K562 (cell line): ENCODE measurements at regions of chr2 and their contacts with region 1.

Region 1: DNA sequence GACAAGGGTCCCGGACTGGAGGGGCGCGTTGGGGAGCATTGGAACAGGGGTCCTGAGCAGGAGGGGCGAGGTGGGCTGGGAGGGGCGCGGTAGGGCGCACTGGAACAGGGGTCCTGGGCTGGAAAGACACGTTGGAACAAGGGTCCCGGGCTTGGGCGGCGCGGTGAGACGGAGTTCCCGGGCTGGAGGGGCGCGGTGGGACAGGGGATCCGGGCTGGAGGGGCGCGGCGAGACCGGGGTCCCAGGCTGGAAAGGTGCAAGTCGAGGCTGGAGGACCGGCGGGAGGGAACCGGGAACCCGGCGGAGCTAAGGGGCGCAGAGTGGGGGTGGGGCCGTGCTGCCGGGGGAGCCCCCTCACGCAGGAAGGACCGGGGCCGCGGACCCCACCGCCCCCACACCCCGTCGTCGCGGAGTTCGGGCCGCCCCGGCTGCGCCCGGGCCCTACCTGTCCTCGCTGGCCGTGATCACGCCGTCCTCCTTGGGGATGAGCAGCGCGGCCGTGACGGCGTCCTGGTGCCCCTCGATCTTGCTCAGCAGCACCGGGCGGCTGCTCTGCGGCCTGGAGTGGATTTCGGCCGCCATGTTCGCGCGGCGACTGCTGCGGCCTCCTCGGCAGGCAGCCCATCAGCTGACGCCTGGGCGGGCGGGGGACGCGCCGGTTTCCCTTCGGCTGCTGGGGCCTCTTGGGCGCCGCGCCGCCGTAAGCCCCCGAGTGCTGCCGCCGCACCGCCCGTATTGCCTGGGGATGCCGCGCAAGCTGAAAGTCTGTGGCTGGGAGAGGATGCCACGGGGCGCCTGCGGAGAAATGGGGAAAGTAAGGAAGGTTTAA is at the start of gene WDFY1:
- DNase-seq: peak; percentile 75 to 90 (median 83)
- ATAC-seq: peak; percentile 97
- H3K4me3 ChIP-seq: peak within 1 kb of the TSS; percentile 78
- H3K27ac ChIP-seq: peak within 1 kb of the TSS; percentile 72
- H3K4me1 ChIP-seq: peaks cover 15 to 17% of the 10 kb centered on the region in 2 experiments; a peak in 4 of 5 replicates
- H3K27me3 ChIP-seq: no peaks in the 10 kb centered on the region
- CTCF ChIP-seq: 0 out of 6 replicates have a peak, but pooled peaks of 1 of the 3 experiments have one; percentile 9
- EP300 ChIP-seq: no peak
- POLR2A ChIP-seq: peak; percentile 77
- RAD21 ChIP-seq: peak; percentile 7 to 19; a peak in 1 of 4 replicates
- polyA plus RNA-seq, gene WDFY1: 5.4 to 7.4 TPM

Region 2: GRCh38 chr2:223957092-223957851 is 12.4 kb after region 1 on chr2 and contains the start of gene MRPL44:
- CTCF ChIA-PET with region 1: no interaction called
- POLR2A ChIA-PET with region 1: interaction called, 3 read pairs
- in situ Hi-C with region 1: no loop called
- intact Hi-C with region 1: loop called (anchors 1 kb)
- DNase-seq: peak; percentile 85 to 93 (median 88)
- ATAC-seq: peak; percentile 99
- H3K4me3 ChIP-seq: peak within 1 kb of the TSS; percentile 86
- H3K27ac ChIP-seq: peak within 1 kb of the TSS; percentile 84
- H3K4me1 ChIP-seq: peaks cover 0 to 6% of the 10 kb centered on the region in 2 experiments; a peak in 2 of 5 replicates
- H3K27me3 ChIP-seq: no peaks in the 10 kb centered on the region
- CTCF ChIP-seq: no peak
- EP300 ChIP-seq: no peak
- POLR2A ChIP-seq: peak; percentile 84
- RAD21 ChIP-seq: 0 out of 4 replicates have a peak, but pooled peaks have one; percentile 8 to 17
- polyA plus RNA-seq, gene MRPL44: 10.4 to 16.4 TPM

Region 3: GRCh38 chr2:223989273-223990232 is 44.6 kb after region 1 on chr2:
- CTCF ChIA-PET with region 1: no interaction called
- POLR2A ChIA-PET with region 1: no interaction called
- in situ Hi-C with region 1: no loop called
- intact Hi-C with region 1: no loop called
- DNase-seq: peak; percentile 8 to 39 (median 16)
- ATAC-seq: peak; percentile 93
- H3K4me3 ChIP-seq: no peak overlapping the region
- H3K27ac ChIP-seq: no peak overlapping the region
- H3K4me1 ChIP-seq: no peaks in the 10 kb centered on the region; a peak in 1 of 5 replicates
- H3K27me3 ChIP-seq: peaks cover 11 to 26% of the 10 kb centered on the region in 2 experiments; a peak in 4 of 5 replicates
- CTCF ChIP-seq: peak; percentile 46 to 56 (median 52)
- EP300 ChIP-seq: no peak
- POLR2A ChIP-seq: no peak
- RAD21 ChIP-seq: peak; percentile 35 to 66